ENCODE measurements at regions of chr11 and their contacts with region 1.

Region 1: DNA sequence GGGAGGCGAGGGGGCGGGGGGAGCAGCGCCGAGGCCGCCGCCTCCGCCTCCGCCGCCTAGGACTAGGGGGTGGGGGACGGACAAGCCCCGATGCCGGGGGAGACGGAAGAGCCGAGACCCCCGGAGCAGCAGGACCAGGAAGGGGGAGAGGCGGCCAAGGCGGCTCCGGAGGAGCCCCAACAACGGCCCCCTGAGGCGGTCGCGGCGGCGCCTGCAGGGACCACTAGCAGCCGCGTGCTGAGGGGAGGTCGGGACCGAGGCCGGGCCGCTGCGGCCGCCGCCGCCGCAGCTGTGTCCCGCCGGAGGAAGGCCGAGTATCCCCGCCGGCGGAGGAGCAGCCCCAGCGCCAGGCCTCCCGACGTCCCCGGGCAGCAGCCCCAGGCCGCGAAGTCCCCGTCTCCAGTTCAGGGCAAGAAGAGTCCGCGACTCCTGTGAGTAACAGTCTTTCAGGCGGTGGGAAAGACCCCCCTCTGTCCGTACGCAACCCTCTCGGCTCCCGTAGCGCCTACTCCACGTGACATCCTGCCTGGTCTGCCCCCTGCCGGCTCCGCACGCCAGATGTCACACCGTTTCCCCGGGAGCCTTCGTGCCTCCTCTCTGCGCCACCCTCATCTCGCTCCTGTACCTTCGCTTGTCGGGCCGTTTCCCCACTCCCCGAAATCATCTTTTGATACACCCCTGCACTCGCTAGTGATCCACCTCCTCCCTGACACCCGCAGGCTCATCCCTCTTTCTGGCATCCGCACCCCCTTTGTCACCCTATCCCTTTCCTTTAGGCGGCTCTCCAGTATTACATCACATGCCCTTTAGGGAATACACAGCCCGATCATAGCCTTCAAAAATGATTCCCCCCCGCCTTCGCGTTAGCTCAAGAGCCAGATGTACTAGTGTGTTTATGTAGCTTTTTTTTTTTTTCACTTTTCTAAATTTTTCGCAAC is 598 bp downstream of the ZFP91 start:
- DNase-seq: peak; percentile 95
- H3K4me3 Mint-ChIP-seq: peak overlapping the region; percentile 87
- H3K27ac Mint-ChIP-seq: peak overlapping the region; percentile 100
- H3K4me1 Mint-ChIP-seq: peaks cover 46% of the 10 kb centered on the region
- H3K27me3 Mint-ChIP-seq: no peaks in the 10 kb centered on the region

Region 2: GRCh38 chr11:57426929-57427726 is 1152.3 kb before region 1 on chr11 and contains the start of gene SLC43A3:
- CTCF ChIA-PET with region 1: no interaction called
- POLR2A ChIA-PET with region 1: no interaction called
- intact Hi-C with region 1: loop called (anchors 1 kb)
- DNase-seq: peak; percentile 87
- H3K4me3 Mint-ChIP-seq: peak within 1 kb of the TSS; percentile 96
- H3K27ac Mint-ChIP-seq: peak within 1 kb of the TSS; percentile 92
- H3K4me1 Mint-ChIP-seq: peaks cover 41% of the 10 kb centered on the region
- H3K27me3 Mint-ChIP-seq: no peaks in the 10 kb centered on the region
- total RNA-seq, gene SLC43A3: 170 to 186 TPM

Region 3: DNA sequence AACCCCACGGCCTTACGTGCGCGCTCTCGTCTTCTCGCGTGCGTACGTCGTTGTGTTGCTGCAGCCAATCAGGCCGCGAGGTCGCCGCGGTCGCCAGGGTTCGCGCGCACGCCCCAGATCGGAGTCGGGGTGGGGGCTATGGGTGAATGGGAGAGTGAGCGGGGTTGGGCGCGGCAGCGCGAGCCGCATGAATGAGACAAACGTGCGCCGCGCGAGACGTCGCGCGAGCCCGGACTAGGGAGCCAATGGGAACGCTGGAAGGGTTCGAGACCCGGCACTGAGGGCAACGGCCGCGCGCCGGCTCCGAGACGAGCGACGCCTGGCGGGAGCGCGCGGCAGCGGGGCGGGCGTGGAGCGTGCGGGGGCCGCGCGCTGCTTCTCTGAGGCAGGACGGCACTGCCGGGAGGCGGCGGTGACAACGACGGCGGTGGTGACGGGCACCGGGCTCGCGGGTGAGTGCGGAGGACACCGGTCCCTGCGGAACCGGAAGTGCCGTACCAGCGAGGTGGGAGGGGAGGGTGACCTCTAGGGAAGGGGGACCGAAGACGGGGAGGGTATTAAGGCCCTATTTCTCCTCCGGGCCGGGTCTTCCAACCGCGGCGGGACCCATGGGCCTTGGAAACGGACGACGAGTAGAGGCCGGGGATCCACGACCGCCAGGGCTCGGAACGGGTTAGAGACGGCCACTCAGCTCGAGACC is 911.6 kb before region 1 on chr11 and contains the start of gene ZDHHC5:
- CTCF ChIA-PET with region 1: no interaction called
- POLR2A ChIA-PET with region 1: no interaction called
- intact Hi-C with region 1: loop called (anchors 1 kb)
- DNase-seq: peak; percentile 100
- H3K4me3 Mint-ChIP-seq: peak within 1 kb of the TSS; percentile 83
- H3K27ac Mint-ChIP-seq: peak within 1 kb of the TSS; percentile 100
- H3K4me1 Mint-ChIP-seq: peaks cover 41% of the 10 kb centered on the region
- H3K27me3 Mint-ChIP-seq: no peaks in the 10 kb centered on the region
- total RNA-seq, gene ZDHHC5: 56.8 to 65.5 TPM

Region 4: GRCh38 chr11:58567889-58568512 is 11.5 kb before region 1 on chr11:
- CTCF ChIA-PET with region 1: interaction called, 28 read pairs
- POLR2A ChIA-PET with region 1: interaction called, 13 read pairs
- intact Hi-C with region 1: no loop called
- DNase-seq: peak; percentile 84
- H3K4me3 Mint-ChIP-seq: no peak overlapping the region
- H3K27ac Mint-ChIP-seq: peak overlapping the region; percentile 71
- H3K4me1 Mint-ChIP-seq: peaks cover 60% of the 10 kb centered on the region
- H3K27me3 Mint-ChIP-seq: no peaks in the 10 kb centered on the region

Region 5: DNA sequence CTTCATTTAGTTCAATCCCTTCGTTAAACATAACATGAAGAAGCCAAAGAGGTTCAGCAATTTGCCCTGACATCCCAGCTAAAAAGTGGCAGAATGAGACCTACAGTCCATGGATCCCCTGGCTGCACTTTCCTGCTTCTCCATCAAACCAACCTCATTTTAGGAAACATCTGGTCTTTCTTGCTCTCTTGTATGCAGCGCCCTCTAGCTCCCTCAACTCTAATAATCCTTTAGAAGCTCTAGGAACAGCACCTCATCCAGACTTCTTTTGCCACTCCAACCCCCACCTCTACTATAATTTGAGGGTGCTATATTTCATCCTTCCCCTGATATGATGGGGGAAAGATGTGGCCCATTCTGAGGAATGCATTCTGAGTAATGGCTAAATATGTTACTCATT is 50.4 kb after region 1 on chr11:
- CTCF ChIA-PET with region 1: interaction called, 22 read pairs
- POLR2A ChIA-PET with region 1: interaction called, 4 read pairs
- intact Hi-C with region 1: loop called (anchors 1 kb)
- DNase-seq: peak; percentile 24
- H3K4me3 Mint-ChIP-seq: no peak overlapping the region
- H3K27ac Mint-ChIP-seq: no peak overlapping the region
- H3K4me1 Mint-ChIP-seq: peaks cover 7% of the 10 kb centered on the region
- H3K27me3 Mint-ChIP-seq: no peaks in the 10 kb centered on the region

Region 6: DNA sequence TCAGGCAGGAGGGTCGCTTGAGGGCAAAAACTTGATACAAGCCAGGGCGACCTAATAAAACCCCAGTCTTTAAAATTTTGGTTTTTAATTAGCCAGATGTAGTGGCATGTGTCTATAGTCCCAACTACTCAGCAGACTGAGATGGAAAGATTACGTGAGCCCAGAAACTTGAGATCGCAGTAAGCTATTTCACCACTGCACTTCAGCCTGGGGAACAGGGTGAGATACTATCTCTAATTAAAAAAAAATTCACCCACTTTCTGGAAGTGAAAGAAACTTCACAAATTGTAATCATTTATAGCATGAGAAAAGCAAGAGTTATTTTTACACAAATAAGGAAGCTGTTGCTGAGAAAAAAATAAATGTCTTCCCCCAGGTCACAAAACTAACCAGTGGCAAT is 265.9 kb after region 1 on chr11:
- CTCF ChIA-PET with region 1: no interaction called
- POLR2A ChIA-PET with region 1: no interaction called
- intact Hi-C with region 1: no loop called
- DNase-seq: no peak
- H3K4me3 Mint-ChIP-seq: no peak overlapping the region
- H3K27ac Mint-ChIP-seq: no peak overlapping the region
- H3K4me1 Mint-ChIP-seq: no peaks in the 10 kb centered on the region
- H3K27me3 Mint-ChIP-seq: peaks cover 3% of the 10 kb centered on the region

Region 7: GRCh38 chr11:59053387-59053786 is 473.9 kb after region 1 on chr11:
- CTCF ChIA-PET with region 1: interaction called, 4 read pairs
- POLR2A ChIA-PET with region 1: no interaction called
- intact Hi-C with region 1: loop called (anchors 5 kb)
- DNase-seq: peak; percentile 86
- H3K4me3 Mint-ChIP-seq: no peak overlapping the region
- H3K27ac Mint-ChIP-seq: no peak overlapping the region
- H3K4me1 Mint-ChIP-seq: peaks cover 4% of the 10 kb centered on the region
- H3K27me3 Mint-ChIP-seq: peaks cover 17% of the 10 kb centered on the region

Region 8: DNA sequence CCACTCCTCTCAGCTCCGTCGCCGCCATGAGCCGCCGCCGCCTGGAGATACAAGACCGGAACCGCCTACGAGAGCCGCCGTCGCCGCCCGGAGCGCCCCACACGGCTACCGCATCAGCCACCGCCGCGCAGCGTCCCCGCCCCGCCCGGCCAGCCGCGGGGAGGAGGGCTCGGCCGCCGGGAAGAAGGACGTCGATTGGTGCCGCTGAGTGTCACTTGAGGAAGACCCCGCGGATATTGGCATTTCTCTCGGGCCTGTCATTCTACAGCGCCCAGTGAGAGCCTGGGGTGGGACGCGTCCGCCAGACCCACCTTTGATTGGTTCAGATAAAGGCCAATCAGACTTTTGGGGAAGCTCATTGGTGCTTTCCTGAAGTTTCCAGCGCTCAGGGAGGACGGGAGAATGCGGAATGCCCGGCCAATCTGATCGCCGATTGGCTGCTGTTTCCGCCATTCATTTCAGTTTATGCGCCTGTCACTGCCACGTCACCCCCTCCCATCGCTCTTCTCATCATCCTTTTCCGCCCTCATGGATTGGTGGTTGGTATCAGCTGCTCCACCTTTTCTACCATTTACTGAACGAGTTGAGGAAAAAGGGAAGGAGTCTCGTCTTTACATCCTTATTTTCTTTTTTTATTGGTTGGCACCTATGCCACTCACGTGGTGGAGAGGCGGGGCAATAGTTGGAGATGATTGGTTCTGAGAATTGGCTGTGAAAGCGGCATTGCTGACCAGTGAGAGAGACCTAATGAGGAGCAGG is 1036.4 kb after region 1 on chr11 and contains the start of gene OSBP:
- CTCF ChIA-PET with region 1: no interaction called
- POLR2A ChIA-PET with region 1: no interaction called
- intact Hi-C with region 1: loop called (anchors 5 kb)
- DNase-seq: peak; percentile 99
- H3K4me3 Mint-ChIP-seq: peak within 1 kb of the TSS; percentile 89
- H3K27ac Mint-ChIP-seq: peak within 1 kb of the TSS; percentile 95
- H3K4me1 Mint-ChIP-seq: peaks cover 41% of the 10 kb centered on the region
- H3K27me3 Mint-ChIP-seq: no peaks in the 10 kb centered on the region
- total RNA-seq, gene OSBP: 37.2 to 40.9 TPM